ENCODE measurements at regions of chr7 and their contacts with region 1.

Region 1: DNA sequence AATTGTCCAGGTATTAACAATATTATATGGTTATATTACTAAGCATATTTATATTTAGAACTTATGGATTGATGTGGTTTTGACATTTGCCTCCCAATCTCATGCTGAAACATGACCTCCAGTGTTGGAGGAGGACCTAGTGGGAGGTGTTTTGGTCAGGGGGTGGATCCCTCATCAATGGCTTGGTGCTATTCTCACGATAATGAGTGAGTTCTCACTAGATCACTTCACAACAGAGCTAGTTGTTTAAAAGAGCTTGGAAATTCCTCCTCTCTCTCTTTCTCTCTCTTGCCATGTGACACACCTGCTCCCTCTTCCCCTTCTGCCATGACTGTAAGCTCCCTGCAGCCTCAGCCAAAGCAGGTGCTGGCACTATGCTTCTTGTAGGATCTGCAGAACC is 19.0 kb downstream of the TFEC start:
- DNase-seq: no peak
- ATAC-seq: no peak
- H3K4me3 ChIP-seq: no peak overlapping the region
- H3K27ac ChIP-seq: no peak overlapping the region
- H3K4me1 ChIP-seq: no peaks in the 10 kb centered on the region
- H3K27me3 ChIP-seq: no peaks in the 10 kb centered on the region
- CTCF ChIP-seq: no peak
- EP300 ChIP-seq: no peak
- POLR2A ChIP-seq: no peak
- RAD21 ChIP-seq: no peak

Region 2: DNA sequence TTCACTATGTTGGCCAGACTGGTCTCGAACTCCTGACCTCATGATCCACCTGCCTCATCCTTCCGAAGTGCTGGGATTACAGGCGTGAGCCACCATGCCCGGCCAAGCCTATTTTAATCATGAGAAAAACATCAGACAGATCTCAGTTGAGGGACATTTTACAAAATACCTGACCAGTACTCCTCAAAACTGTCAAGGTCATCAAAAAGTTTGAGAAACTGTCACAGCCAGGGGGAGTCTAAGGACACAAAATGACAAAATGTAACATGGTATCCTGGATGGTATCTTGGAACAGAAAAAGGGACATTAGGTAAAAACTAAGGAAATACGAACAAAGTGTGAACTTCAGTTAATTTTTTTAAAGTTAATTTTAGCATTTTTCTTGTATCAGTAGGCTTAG is 1873.0 kb before region 1 on chr7:
- CTCF ChIA-PET with region 1: no interaction called
- POLR2A ChIA-PET with region 1: no interaction called
- in situ Hi-C with region 1: no loop called
- intact Hi-C with region 1: loop called (anchors 5 kb)
- DNase-seq: no peak
- ATAC-seq: no peak
- H3K4me3 ChIP-seq: no peak overlapping the region
- H3K27ac ChIP-seq: no peak overlapping the region
- H3K4me1 ChIP-seq: no peaks in the 10 kb centered on the region
- H3K27me3 ChIP-seq: no peaks in the 10 kb centered on the region
- CTCF ChIP-seq: no peak
- EP300 ChIP-seq: no peak
- POLR2A ChIP-seq: no peak
- RAD21 ChIP-seq: no peak

Region 3: GRCh38 chr7:115910541-115911164 is 100.9 kb before region 1 on chr7:
- CTCF ChIA-PET with region 1: no interaction called
- POLR2A ChIA-PET with region 1: no interaction called
- in situ Hi-C with region 1: no loop called
- intact Hi-C with region 1: no loop called
- DNase-seq: peak; percentile 14
- ATAC-seq: no peak
- H3K4me3 ChIP-seq: no peak overlapping the region
- H3K27ac ChIP-seq: no peak overlapping the region
- H3K4me1 ChIP-seq: no peaks in the 10 kb centered on the region
- H3K27me3 ChIP-seq: no peaks in the 10 kb centered on the region
- CTCF ChIP-seq: peak; percentile 59
- EP300 ChIP-seq: no peak
- POLR2A ChIP-seq: no peak
- RAD21 ChIP-seq: no peak

Measured in HepG2 (cell line).